Psoas muscle (tissue), 8 donors: ENCODE measurements at regions of chr9 and their contacts with region 1.

Region 1: GRCh38 chr9:22528485-22528884 is 81.9 kb downstream of the DMRTA1 start:
- DNase-seq: no peak
- ATAC-seq: peak; percentile 55 to 89 (median 65)
- H3K4me3 ChIP-seq: no peak overlapping the region
- H3K27ac ChIP-seq: no peak overlapping the region
- H3K4me1 ChIP-seq: peaks cover 13% of the 10 kb centered on the region
- H3K27me3 ChIP-seq: no peaks in the 10 kb centered on the region
- CTCF ChIP-seq: peak; percentile 66

Region 2: DNA sequence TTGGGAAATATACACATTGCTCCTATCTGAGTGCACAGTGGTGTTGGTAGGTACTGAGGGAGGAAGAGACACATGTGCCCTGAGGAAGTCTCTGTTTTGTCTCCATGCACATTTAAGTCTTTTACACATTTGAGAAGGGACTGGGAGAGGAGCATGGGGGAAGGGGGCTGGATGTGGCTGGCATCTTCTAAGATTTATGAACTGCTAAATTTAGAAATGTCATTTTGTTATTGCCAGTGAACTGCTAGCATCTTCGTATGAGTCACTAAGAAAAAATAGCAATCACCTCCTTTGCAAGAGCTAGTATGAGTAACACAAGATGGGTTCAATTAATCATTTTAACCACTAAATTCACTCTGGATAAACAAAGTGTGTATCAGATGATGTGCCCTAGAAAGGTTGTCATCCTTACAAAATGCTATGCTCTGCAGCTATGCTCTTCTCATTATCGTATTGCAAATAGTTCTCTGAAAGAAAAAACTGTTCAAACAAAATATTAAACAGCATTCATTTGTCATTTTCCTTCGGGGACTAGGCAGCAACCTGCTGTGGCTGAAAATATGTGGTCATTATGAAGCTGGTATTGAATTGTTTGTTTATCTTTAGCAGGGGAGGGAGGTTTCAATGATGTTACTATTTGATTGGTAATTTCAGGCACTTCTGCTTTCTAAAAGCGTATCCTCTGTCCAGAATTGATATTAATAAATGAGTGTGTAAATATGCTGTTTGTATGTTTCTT is 154.6 kb after region 1 on chr9:
- intact Hi-C with region 1: loop called in 1 of 2 experiments (anchors 5 kb)
- DNase-seq: peak; percentile 18 to 48
- ATAC-seq: peak; percentile 89 to 94 (median 92)
- H3K4me3 ChIP-seq: peak overlapping the region; percentile 27
- H3K27ac ChIP-seq: peak overlapping the region; percentile 92
- H3K4me1 ChIP-seq: peaks cover 19% of the 10 kb centered on the region
- H3K27me3 ChIP-seq: no peaks in the 10 kb centered on the region
- CTCF ChIP-seq: no peak

Region 3: GRCh38 chr9:23088932-23089366 is 560.5 kb after region 1 on chr9:
- intact Hi-C with region 1: loop called in 1 of 2 experiments (anchors 5 kb)
- DNase-seq: no peak
- ATAC-seq: peak in 2 of 4 donors; percentile 33 to 34
- H3K4me3 ChIP-seq: no peak overlapping the region
- H3K27ac ChIP-seq: no peak overlapping the region
- H3K4me1 ChIP-seq: no peaks in the 10 kb centered on the region
- H3K27me3 ChIP-seq: no peaks in the 10 kb centered on the region
- CTCF ChIP-seq: peak; percentile 11